ENCODE measurements at regions of chr16 and their contacts with region 1.

Region 1: GRCh38 chr16:10338426-10338825 is 47.4 kb upstream of the ATF7IP2 start:
- DNase-seq: no peak
- H3K4me3 ChIP-seq: no peak overlapping the region
- H3K27ac ChIP-seq: no peak overlapping the region
- H3K4me1 ChIP-seq: no peaks in the 10 kb centered on the region
- H3K27me3 ChIP-seq: no peaks in the 10 kb centered on the region
- CTCF ChIP-seq: no peak

Region 2: DNA sequence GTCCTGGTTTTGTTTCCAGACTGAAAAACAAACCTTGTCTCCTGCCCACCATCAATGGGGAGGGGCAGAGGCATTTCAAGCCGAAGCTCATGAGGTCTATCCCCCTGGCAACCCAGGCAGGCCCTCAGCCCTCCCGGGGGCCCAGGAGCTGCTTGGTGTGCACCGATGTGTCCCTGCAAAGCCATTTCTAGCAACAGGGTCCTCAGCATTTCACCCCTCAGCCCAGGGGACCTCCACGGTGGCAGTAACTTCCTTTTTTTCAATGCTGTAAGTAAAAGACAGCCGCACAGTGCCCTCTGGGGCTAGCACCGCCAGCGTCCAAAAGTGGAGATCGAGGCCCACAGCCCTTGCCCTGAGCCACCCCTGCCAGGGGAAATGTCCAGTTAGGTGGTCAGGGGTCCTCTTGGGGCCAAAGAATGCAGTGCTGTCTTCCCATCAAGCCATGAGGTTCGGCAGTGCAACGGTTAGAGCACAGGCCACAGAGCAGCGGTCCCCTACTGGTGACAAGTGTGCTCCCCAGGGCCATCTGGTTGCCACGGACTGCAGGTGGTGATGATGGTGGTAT is 1168.4 kb after region 1 on chr16:
- CTCF ChIA-PET with region 1: interaction called, 10 read pairs
- POLR2A ChIA-PET with region 1: no interaction called
- intact Hi-C with region 1: no loop called
- DNase-seq: no peak
- H3K4me3 ChIP-seq: no peak overlapping the region
- H3K27ac ChIP-seq: no peak overlapping the region
- H3K4me1 ChIP-seq: peaks cover 5% of the 10 kb centered on the region; the same call in 1 of the 2 replicates
- H3K27me3 ChIP-seq: no peaks in the 10 kb centered on the region
- CTCF ChIP-seq: no peak